ENCODE measurements at regions of chr16 and their contacts with region 1.

Region 1: DNA sequence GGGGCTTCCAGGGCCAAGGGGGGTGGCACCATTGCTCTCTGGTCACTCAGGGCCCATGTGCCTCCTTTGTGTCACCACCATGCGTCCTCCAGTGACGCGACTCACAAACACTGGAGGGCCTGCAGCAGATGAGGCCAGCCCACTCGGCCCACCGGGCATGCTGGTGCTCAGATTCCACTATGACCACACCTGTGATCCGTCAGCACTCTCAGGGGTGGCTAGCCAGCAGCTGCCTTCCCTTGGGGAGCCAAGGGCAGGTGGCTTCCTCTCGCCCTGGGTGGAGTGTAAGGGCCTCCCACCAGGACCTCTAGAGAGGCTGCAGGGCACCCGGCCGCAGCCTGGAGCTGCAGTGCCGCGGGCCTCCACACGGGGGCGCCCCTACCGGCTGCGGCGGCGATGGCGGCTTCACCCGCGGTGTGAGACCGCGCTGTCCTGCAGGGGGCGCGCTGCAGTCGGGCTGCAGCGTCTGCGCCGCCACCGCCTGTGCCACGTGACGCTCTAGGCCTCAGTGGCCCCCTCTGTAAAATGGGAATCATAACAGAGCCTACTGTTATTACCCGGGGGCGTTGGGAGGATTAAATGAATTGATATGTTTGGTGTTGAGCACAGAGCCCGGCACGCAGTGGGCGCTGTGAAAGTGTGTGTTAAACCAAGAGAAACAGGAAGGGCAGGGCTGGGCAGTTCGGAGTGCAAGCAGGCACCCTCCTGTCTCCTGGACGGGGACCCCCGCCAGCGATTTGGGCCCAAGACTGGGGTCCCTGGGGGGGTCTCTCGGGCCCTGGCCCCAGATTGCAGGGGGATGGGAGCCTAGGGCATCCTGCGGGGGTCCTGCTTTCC is 192.4 kb upstream of the GSE1 start:
- DNase-seq: peak; percentile 35 to 59
- H3K4me3 ChIP-seq: no peak overlapping the region
- H3K27ac ChIP-seq: no peak overlapping the region
- H3K4me1 ChIP-seq: peaks cover 0 to 4% of the 10 kb centered on the region in 2 donors
- H3K27me3 ChIP-seq: no peaks in the 10 kb centered on the region
- CTCF ChIP-seq: peak; percentile 96 to 100 (median 98)
- POLR2A ChIP-seq: peak in 1 of 2 donors; percentile 25

Region 2: DNA sequence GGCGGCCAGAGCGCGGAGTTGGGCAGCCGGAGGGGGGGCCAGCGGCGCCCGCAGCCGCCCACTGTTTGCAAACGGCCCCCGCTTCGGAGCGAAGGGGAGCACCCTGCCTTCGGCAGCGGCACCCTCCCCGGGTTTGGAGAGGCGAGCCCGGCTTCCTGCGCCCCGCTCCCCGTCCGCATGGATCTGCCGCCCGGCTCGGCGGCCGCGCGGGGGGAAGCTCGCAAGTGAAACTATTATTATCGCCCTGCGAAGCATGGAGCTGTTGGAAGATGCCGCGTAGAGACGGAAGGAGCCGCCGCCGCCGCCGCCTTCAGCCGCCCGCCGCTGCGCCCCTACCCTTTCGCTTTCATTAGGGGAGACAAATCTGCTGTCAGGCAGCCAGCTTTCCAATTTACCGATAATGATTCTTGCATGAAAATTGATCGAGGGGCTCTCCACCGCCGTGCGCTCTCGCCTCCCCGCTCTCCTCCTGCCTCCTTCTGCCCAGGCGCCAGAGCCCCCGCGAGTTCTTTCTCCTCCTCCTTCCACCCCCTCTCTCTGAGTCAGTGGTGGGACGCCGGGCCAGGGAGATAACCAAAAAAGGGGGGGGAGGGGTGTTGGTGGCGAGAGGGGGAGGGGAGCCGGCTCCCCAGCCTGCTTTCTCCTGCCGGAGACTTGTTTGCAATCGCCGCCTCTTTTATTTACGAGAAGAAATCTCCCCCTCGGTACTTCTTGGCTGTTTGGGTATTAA is 134.3 kb after region 1 on chr16:
- intact Hi-C with region 1: loop called (anchors 5 kb)
- DNase-seq: peak; percentile 80 to 85
- H3K4me3 ChIP-seq: peak overlapping the region; percentile 78 to 87
- H3K27ac ChIP-seq: peak overlapping the region; percentile 90 to 91
- H3K4me1 ChIP-seq: peaks cover 0 to 13% of the 10 kb centered on the region in 2 donors
- H3K27me3 ChIP-seq: no peaks in the 10 kb centered on the region
- CTCF ChIP-seq: no peak
- POLR2A ChIP-seq: peak in 1 of 2 donors; percentile 39

Region 3: DNA sequence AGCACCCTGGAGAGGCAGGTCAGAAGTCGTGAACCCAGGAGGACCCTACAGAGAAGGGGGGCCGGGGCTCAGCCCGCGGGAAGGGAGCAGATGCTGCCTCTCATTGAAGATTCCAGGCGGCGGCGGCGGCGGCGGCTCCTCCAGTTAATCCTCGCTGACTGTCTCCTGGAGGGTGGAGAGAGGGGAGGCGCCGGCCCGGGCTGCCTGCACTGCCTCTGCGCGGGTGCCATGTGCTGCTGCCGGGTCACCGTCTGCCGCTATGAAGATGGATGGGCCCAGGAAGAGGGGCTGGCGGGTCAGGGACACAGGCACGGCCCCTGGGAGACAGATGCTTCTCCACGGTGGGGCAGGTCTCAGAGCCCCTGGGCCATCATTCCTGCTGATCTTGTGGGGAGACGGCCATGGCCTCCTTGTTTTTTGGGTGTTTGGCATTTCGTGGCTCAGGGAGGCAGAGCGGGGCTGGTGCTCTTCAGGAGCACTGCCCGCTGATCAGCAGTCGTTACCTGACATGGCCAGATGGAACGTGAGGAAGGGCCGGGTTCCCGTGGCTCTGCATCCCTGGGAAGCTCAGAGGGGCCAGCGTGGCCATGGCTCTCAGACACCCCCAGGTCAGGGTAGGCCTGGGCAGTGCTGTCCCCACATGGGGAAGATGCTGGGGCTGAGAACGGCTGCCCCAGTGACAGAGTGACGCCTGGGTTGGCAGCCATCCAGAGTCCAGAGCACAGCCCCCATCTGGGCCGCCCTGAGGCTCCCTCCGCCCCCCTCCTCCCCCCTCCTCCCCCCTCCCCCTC is 231.9 kb after region 1 on chr16:
- intact Hi-C with region 1: no loop called
- DNase-seq: peak; percentile 73 to 81
- H3K4me3 ChIP-seq: no peak overlapping the region
- H3K27ac ChIP-seq: peak overlapping the region; percentile 76 to 82
- H3K4me1 ChIP-seq: peaks cover 0 to 28% of the 10 kb centered on the region in 2 donors
- H3K27me3 ChIP-seq: no peaks in the 10 kb centered on the region
- CTCF ChIP-seq: no peak
- POLR2A ChIP-seq: peak in 1 of 2 donors; percentile 11

Measured in uterus (tissue), 4 donors.